ENCODE measurements at regions of chr2 and their contacts with region 1.

Region 1: GRCh38 chr2:239245872-239246701 is 154.7 kb downstream of the HDAC4 start:
- DNase-seq: peak; percentile 71 to 74
- H3K4me3 ChIP-seq: peak overlapping the region; percentile 47; the same call in 1 of the 2 replicates
- H3K27ac ChIP-seq: peak overlapping the region; percentile 95
- H3K4me1 ChIP-seq: peaks cover 46% of the 10 kb centered on the region
- H3K27me3 ChIP-seq: no peaks in the 10 kb centered on the region
- CTCF ChIP-seq: no peak

Region 2: DNA sequence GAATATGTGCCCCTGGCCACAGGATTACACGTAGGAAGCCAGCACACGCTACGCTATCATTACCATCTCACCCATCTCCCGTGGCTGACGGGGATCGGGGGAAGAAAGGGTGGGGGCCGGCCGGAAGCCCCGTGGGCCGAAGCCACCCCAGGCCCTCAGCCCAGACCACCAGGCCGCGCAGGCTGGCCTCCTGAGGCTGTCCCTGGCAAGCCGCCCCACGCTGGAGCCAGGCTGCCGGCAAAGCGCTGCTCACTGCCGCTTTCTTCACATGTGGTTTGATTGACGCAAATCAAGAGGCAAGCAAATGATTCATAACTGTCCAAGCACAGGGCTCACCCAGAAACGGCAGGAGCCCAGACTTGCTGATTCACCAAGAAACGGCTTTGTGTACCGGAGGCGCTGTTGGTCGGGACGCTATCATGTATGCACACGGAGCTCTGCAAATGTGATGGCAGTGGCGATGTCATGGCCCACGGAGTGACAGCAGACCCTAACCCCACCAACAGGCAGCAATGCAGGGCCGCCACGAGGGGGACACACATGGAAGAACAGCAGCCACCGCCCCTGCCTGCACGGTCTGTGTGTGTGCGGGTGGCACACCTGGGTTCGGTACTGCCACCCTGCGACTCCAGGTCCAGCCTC is 29.1 kb after region 1 on chr2:
- CTCF ChIA-PET with region 1: interaction called, 4 read pairs
- POLR2A ChIA-PET with region 1: no interaction called
- intact Hi-C with region 1: loop called (anchors 1 kb)
- DNase-seq: peak; percentile 87 to 97
- H3K4me3 ChIP-seq: peak overlapping the region; percentile 59
- H3K27ac ChIP-seq: peak overlapping the region; percentile 82
- H3K4me1 ChIP-seq: peaks cover 47% of the 10 kb centered on the region
- H3K27me3 ChIP-seq: no peaks in the 10 kb centered on the region
- CTCF ChIP-seq: no peak

Region 3: GRCh38 chr2:239630618-239631286 is 384.7 kb after region 1 on chr2:
- CTCF ChIA-PET with region 1: no interaction called
- POLR2A ChIA-PET with region 1: no interaction called
- intact Hi-C with region 1: no loop called
- DNase-seq: peak; percentile 14 to 60
- H3K4me3 ChIP-seq: no peak overlapping the region
- H3K27ac ChIP-seq: no peak overlapping the region
- H3K4me1 ChIP-seq: no peaks in the 10 kb centered on the region
- H3K27me3 ChIP-seq: peaks cover 80% of the 10 kb centered on the region
- CTCF ChIP-seq: no peak

Region 4: DNA sequence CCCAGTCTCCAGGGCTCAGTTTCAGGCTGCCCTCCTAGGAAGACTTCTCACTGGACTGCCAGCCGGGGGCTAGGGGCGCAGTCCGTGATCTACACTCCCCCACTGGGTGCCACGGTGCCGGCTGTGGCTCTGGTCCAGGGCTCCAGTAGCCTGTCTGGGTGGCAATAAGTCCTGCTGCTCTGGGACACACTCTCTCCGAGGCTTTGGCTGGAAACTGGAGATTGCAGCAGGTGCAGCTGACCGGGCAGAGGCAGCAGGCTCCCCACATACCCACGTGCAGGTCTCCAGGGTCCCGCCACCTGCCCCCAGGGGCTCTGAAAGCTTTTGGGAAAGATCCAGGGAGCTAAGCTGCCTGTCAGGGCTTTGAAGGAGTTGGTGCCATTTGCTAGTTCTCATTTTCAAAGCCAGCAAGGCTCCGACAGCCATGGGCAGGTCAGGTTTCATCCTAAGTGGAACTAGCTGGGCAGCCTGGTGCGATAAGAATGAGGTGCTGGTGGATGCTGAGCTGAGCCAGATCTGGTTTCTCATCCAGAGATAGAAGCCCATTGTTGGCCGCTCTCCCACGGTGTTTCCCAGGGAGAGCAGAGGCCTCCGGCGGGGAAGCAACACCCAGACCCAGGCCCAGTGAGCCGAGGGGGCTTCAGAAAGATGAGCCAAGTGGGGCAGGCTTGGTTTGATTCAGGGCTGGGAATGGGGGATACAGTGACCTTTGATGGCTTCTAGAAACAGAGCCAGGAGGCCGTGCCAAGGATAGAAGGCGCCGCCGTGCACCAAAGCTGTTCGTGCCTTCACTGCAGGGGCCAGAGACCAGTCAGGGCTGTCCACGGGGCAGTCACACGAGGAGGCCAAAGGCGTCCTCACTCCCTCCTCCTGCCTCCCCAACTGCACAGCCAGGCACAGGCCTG is 1047.7 kb after region 1 on chr2:
- CTCF ChIA-PET with region 1: no interaction called
- POLR2A ChIA-PET with region 1: no interaction called
- intact Hi-C with region 1: no loop called
- DNase-seq: no peak
- H3K4me3 ChIP-seq: no peak overlapping the region
- H3K27ac ChIP-seq: no peak overlapping the region
- H3K4me1 ChIP-seq: no peaks in the 10 kb centered on the region
- H3K27me3 ChIP-seq: peaks cover 42% of the 10 kb centered on the region
- CTCF ChIP-seq: no peak